Aorta (tissue), 5 donors: ENCODE measurements at regions of chr1 and their contacts with region 1.

Region 1: GRCh38 chr1:58618303-58618702 is 41.3 kb upstream of the TACSTD2 start:
- DNase-seq: peak; percentile 79 to 86
- ATAC-seq: peak; percentile 76
- H3K4me3 ChIP-seq: no peak overlapping the region
- H3K27ac ChIP-seq: peak overlapping the region in 1 of 2 donors; percentile 61
- H3K4me1 ChIP-seq: peaks cover 0 to 4% of the 10 kb centered on the region in 2 donors
- H3K27me3 ChIP-seq: no peaks in the 10 kb centered on the region

Region 2: DNA sequence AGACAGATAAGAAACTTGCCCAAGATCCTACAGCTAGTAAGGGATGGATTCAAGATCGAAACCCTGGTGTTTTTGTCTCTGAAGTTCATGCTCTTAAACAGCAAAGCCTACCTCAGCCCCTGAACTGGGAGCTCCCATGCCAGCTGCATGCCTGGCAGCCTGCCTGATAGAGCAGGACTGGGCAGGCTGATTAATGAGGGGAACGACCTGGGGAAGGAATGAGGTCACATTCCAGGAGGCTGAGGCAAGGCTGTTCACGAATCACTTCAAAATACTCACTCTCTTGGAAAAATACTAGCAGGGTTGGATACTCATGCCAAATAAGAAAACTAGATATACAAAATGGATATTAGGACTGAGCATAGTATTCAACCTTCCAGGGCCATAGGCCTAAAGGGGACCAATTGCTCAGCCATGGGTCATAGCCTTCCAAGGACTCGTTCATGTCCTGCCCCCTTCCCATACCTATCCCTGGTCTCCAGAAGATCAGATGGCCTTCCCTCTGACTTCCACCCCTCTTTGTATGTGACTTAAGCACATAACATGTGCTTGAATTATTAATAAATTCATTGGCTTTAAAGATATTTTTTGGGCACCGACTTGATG is 25.7 kb before region 1 on chr1:
- intact Hi-C with region 1: loop called in 1 of 2 experiments (anchors 2 kb)
- DNase-seq: peak; percentile 90 to 92
- ATAC-seq: peak; percentile 91
- H3K4me3 ChIP-seq: no peak overlapping the region
- H3K27ac ChIP-seq: peak overlapping the region; percentile 49 to 84
- H3K4me1 ChIP-seq: peaks cover 6 to 12% of the 10 kb centered on the region in 2 donors
- H3K27me3 ChIP-seq: no peaks in the 10 kb centered on the region

Region 3: GRCh38 chr1:58699011-58699762 is 80.9 kb after region 1 on chr1:
- intact Hi-C with region 1: no loop called
- DNase-seq: no peak
- ATAC-seq: peak; percentile 3
- H3K4me3 ChIP-seq: peak overlapping the region; percentile 71 to 100
- H3K27ac ChIP-seq: peak overlapping the region; percentile 24 to 68
- H3K4me1 ChIP-seq: no peaks in the 10 kb centered on the region
- H3K27me3 ChIP-seq: no peaks in the 10 kb centered on the region